ENCODE measurements at regions of chr15 and their contacts with region 1.

Region 1: DNA sequence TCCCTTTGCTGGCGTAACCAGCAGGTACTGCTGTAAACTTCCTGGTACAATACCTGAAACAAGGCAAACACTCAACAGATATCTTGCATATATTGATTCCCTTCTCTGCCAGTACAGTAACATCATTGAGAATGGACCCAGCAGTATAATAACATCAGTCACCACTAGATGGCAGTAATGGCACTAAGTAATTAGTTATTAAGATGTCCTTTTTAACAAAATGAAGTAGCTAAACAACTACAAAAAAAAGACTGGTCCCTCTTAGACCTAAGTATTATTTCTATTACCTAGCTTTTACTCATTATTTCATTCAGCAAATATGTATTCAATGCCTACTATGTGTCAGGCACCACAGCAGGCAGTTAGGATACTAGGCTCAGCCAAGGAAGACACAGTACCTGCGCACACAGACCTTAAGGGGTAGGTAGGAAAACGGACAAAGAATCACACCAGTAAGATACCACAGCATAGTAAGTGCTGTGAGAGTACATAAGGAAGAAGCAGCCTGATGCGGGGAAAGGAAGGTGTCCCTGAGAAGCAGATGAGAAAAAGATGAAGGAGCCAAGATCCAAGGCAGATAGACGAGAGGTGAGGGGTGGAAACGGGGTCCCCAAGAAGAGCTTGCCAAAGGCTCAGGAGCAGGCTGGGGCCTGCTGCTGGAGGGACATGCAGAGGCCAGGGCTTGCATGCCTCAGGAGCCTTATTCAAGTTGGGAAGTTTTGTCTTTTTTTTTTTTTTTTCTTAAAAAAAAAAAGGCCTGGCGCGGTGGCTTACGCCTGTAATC is 102.8 kb upstream of the CHD2 start:
- DNase-seq: no peak
- ATAC-seq: peak; percentile 43

Region 2: GRCh38 chr15:92820236-92821021 is 23.1 kb after region 1 on chr15:
- intact Hi-C with region 1: no loop called
- DNase-seq: peak; percentile 94
- ATAC-seq: peak; percentile 97

Region 3: DNA sequence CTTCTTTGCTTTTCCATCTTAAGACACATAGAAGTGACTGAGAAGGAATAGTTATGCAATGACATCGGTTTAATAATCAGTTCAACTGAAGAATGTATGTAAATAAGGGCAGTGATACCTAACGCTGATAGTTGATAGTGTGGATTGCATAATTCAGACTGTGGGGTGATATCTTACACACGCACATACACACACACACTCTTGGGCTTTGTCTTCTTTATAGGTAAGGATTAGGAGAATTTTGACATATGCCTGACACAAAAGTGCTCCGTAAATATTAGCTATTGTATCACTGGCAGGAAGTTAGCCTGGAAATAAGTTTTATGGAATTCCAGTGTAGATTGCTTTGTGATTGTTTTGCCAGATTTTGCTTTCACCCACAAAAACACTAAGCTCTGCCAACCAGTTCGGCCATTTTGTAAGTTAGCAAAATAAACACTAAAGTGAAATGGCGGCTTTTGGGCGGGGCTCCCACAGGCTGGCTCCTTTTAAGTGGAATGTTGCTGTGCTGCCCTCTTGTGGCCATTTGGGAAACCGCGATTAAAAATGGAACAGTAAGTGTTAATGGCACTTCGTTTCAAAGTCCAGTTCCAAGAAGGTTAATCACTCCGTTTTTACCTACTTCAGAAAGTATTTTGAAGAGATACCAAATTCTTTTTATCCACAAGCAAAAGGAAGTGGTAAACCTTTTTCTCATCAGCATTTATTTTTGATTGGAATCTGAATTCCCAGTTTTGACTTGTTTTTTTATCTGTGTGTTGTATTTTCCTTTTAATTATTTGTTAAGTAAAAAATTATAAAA is 120.4 kb after region 1 on chr15:
- intact Hi-C with region 1: loop called (anchors 2 kb)
- DNase-seq: peak; percentile 96
- ATAC-seq: peak; percentile 58

Region 4: GRCh38 chr15:92979011-92979701 is 181.8 kb after region 1 on chr15:
- intact Hi-C with region 1: no loop called
- DNase-seq: no peak
- ATAC-seq: no peak

Region 5: DNA sequence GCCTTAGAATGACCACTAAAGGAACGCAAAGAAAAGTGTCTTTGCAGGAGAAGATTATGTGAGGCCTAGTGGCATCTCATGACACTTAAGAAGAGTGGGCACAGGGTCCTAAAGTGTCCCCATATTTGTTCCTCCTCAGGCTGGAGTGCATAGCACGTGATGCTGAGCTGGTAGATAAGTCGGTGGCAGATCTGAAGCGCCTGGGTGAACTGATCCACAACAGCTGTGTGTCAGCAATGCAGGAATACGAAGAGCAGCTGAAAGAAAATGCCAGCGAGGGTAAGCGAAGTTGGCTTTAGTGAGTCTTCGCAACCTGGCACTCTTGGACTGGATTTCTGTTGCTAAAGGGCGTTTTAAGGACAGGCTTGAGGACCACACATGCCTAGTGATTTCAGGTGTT is 195.4 kb after region 1 on chr15:
- intact Hi-C with region 1: loop called (anchors 10 kb)
- DNase-seq: no peak
- ATAC-seq: peak; percentile 84

Region 6: GRCh38 chr15:93035953-93036800 is 238.8 kb after region 1 on chr15:
- intact Hi-C with region 1: no loop called
- DNase-seq: no peak
- ATAC-seq: no peak

Measured in Right ventricle myocardium inferior (tissue), 1 donor.